Activated B cell treated with CpG ODN at 0.5 μM for 24 hours (primary cell): ENCODE measurements at regions of chr4 and their contacts with region 1.

Region 1: DNA sequence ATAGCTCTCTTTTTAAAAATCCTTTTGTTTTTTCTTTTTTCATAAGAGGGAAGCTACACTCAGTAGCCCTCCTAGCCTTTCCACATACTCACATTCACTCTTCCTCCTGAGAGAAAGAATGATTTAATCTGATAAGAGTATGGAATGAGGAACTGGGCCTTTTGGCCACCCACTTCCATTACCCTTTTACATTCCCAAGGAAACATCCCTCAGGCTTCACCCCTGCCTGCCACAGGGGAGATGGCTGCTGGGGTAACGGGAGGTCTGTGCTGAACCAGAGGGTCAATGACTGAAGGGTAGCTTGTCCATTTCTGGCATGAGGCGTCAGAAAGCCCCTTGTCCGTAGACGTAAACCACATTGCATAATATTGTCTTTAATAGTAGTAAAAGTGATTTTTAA is 67.2 kb upstream of the CCSER1 start:
- DNase-seq: no peak
- ATAC-seq: no peak
- H3K4me3 Mint-ChIP-seq: no peak overlapping the region
- H3K27ac Mint-ChIP-seq: no peak overlapping the region
- H3K4me1 Mint-ChIP-seq: no peaks in the 10 kb centered on the region
- H3K27me3 Mint-ChIP-seq: peaks cover 3% of the 10 kb centered on the region
- CTCF ChIP-seq: no peak

Region 2: GRCh38 chr4:89957046-89957926 is 102.8 kb before region 1 on chr4:
- CTCF ChIA-PET with region 1: no interaction called
- POLR2A ChIA-PET with region 1: interaction called, 10 read pairs
- intact Hi-C with region 1: no loop called
- DNase-seq: no peak
- ATAC-seq: no peak
- H3K4me3 Mint-ChIP-seq: no peak overlapping the region
- H3K27ac Mint-ChIP-seq: no peak overlapping the region
- H3K4me1 Mint-ChIP-seq: no peaks in the 10 kb centered on the region
- H3K27me3 Mint-ChIP-seq: no peaks in the 10 kb centered on the region
- CTCF ChIP-seq: no peak

Region 3: DNA sequence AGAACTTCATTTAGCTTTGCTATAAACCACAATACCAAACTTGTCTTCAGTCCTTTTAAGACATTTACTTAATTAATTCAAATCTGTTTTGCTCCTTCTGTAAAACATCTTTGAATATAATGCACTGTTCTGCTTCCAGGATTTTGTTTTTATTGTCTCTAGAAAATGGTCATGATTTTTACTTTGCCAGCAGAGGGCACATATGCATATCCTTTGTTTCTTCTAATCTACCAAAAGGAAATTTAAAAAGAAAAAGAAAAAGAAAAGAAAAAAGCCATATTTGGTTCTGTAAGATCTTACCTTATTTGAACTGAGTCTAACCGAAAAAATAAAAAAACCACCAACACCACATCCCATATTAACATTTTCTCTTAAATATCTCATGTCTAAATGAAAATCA is 34.8 kb before region 1 on chr4:
- CTCF ChIA-PET with region 1: no interaction called
- POLR2A ChIA-PET with region 1: no interaction called
- intact Hi-C with region 1: no loop called
- DNase-seq: no peak
- ATAC-seq: no peak
- H3K4me3 Mint-ChIP-seq: peak overlapping the region; percentile 15
- H3K27ac Mint-ChIP-seq: no peak overlapping the region
- H3K4me1 Mint-ChIP-seq: peaks cover 37% of the 10 kb centered on the region
- H3K27me3 Mint-ChIP-seq: no peaks in the 10 kb centered on the region
- CTCF ChIP-seq: no peak